Aorta (tissue), 5 donors: ENCODE measurements at regions of chr5 and their contacts with region 1.

Region 1: GRCh38 chr5:79133657-79134451 is 22.2 kb downstream of the BHMT start:
- DNase-seq: peak; percentile 74 to 87
- ATAC-seq: peak; percentile 88
- H3K4me3 ChIP-seq: peak overlapping the region; percentile 29 to 60
- H3K27ac ChIP-seq: peak overlapping the region; percentile 69
- H3K4me1 ChIP-seq: no peaks in the 10 kb centered on the region
- H3K27me3 ChIP-seq: no peaks in the 10 kb centered on the region

Region 2: DNA sequence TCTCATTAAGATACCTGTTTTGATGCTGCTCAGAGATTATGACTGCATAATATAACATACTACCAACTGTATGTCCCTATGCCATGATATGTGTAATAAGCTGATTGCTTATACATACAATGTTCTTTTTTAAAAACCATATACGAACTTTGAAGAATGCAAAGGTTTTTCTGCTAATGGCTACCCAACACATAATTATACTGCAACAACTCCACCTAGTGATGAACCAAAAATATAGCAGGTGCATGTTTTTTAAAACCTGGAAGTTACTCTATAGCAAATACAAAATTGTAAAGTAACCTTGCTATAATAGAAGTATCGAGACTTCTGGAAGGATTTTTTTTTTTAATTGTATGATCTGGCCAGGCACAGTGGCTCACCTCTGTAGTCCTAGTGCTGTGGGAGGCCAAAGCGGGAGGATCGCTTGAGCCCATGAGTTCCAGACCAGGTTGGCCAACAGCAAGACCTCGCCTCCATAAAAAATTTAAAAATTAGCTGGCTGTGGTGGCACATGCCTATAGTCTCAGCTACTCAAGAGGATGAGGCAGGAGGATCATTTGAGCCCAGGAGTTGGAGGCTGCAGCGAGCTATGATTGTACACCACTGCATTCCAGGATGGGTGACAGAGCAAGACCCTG is 331.0 kb after region 1 on chr5:
- intact Hi-C with region 1: loop called (anchors 5 to 10 kb)
- DNase-seq: no peak
- ATAC-seq: no peak
- H3K4me3 ChIP-seq: no peak overlapping the region
- H3K27ac ChIP-seq: no peak overlapping the region
- H3K4me1 ChIP-seq: no peaks in the 10 kb centered on the region
- H3K27me3 ChIP-seq: no peaks in the 10 kb centered on the region